ENCODE measurements at regions of chr18 and their contacts with region 1.

Region 1: DNA sequence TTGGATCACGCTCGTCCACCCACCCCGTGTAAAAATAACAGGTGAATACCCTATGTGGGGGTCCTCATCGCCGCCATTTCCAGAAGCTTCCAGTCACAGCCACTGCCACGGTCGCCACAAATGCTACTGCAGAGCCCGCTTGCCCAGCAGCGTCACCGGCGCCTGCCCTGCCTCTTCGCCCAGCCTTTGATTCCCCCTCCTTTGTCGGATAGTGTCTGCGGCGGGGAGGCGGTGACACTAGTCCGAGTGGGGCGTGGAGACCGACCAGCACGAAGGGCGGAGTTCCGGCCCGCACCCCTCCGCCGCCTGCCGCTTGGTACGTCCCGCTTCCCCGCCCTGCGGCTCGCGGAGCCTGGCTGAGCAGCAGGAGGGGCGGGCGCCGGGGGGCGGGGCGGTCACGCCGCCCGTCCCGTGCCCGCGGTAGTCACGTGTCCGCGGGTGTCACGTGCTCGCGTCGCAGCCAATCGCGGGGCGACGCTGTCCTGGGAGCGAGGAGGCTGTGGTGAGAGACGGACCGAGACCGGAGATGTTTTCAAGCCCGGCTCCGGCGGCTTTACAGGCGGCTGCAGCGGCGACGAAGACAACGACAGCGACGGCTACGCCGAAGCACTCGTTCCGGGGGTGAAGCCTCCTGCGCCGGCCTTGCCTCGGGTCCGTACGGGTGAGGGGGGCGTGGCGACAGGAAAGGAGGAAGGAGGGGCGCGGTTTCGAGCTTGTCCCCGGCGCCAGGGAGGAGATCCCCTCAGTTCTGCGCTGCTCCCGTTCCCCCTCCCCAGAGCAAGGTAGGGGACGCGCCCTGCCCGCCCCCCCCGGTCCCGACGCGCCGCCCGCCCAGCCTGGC is at the start of gene ANKRD12:
- DNase-seq: peak; percentile 98
- ATAC-seq: peak; percentile 75
- H3K4me3 Mint-ChIP-seq: peak within 1 kb of the TSS; percentile 86
- H3K27ac Mint-ChIP-seq: peak within 1 kb of the TSS; percentile 97
- H3K4me1 Mint-ChIP-seq: peaks cover 53% of the 10 kb centered on the region
- H3K27me3 Mint-ChIP-seq: no peaks in the 10 kb centered on the region
- total RNA-seq, gene ANKRD12: 57.5 to 96.0 TPM

Region 2: DNA sequence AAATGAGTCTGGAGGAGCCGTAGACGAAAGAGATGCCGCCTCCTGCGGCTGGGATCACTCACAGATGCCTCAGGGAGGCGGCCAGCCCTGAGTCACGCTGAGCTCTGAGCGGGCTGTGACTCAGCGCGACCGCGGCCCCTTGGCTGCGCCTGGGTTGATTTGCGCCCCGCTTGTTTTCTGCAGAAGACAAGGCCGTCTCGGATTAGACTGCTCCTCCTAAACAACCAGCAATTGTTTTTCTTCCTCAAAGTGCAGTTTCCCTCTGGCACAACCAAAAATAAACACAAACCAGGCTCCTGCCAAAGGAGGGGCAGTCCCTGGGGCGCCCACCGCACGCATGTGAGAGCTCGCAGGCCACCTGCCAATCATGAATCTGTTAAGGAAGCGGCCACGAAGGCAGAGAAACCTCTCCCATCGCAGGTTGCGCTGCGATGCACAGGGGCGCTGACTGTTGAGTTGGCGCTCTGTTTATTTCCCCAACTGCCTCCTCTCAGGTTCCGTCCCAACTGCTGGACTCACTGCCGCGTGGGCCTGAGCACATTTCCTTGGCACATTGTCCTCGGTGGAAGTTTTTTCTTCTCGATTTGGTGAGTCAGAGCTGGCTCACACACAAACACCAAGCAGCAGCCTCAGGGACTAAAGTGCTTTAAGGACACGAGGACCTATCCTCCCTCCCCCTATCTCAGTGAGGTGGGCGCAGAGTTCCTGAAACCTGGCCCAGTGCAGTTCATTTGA is 119.2 kb before region 1 on chr18:
- CTCF ChIA-PET with region 1: no interaction called
- POLR2A ChIA-PET with region 1: no interaction called
- intact Hi-C with region 1: loop called in 1 of 2 experiments (anchors 2 kb)
- DNase-seq: peak; percentile 92
- ATAC-seq: peak; percentile 100
- H3K4me3 Mint-ChIP-seq: peak overlapping the region; percentile 42
- H3K27ac Mint-ChIP-seq: peak overlapping the region; percentile 72
- H3K4me1 Mint-ChIP-seq: peaks cover 14% of the 10 kb centered on the region
- H3K27me3 Mint-ChIP-seq: no peaks in the 10 kb centered on the region

Region 3: DNA sequence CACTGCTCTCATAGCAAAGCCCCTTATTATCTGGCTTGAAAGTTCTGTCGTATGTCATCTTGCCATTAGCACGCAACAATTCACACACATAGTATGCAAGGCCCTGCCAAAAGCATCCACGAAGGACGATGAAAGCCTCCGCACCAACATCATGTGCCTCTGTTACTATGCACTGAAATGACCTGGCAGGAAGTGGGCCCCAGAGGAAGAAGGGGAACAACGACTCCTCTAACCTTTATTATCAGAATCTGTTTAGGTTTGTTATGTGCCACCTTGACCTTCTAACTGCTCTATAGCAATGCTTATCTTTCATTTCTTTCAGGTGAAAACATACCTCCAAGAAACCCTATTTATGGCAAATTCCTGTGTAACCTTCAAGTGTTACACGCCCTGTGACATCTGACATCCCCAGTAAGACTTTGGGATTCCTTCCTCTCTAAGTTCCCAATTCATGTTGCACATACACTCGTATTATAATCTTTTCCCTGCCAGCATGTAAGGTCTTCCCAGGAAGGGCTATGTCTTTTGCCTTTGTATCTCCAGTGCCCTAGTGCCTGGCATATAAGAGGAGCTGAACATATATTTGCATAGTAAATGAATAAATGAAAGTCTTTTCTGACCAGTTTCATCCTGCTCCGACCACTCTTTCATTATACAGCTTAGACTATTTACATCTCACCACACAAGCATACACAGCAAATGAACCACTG is 41.1 kb before region 1 on chr18:
- CTCF ChIA-PET with region 1: interaction called, 4 read pairs
- POLR2A ChIA-PET with region 1: interaction called, 6 read pairs
- intact Hi-C with region 1: loop called (anchors 2 kb)
- DNase-seq: peak; percentile 82
- ATAC-seq: peak; percentile 69
- H3K4me3 Mint-ChIP-seq: peak overlapping the region; percentile 68
- H3K27ac Mint-ChIP-seq: peak overlapping the region; percentile 100
- H3K4me1 Mint-ChIP-seq: peaks cover 68% of the 10 kb centered on the region
- H3K27me3 Mint-ChIP-seq: no peaks in the 10 kb centered on the region

Region 4: GRCh38 chr18:9117980-9118841 is 18.3 kb before region 1 on chr18:
- CTCF ChIA-PET with region 1: interaction called, 5 read pairs
- POLR2A ChIA-PET with region 1: interaction called, 24 read pairs
- intact Hi-C with region 1: loop called (anchors 1 kb)
- DNase-seq: no peak
- ATAC-seq: peak; percentile 51
- H3K4me3 Mint-ChIP-seq: peak overlapping the region; percentile 66
- H3K27ac Mint-ChIP-seq: peak overlapping the region; percentile 99
- H3K4me1 Mint-ChIP-seq: peaks cover 80% of the 10 kb centered on the region
- H3K27me3 Mint-ChIP-seq: no peaks in the 10 kb centered on the region

Region 5: GRCh38 chr18:9516437-9517064 is 380.0 kb after region 1 on chr18:
- CTCF ChIA-PET with region 1: no interaction called
- POLR2A ChIA-PET with region 1: no interaction called
- intact Hi-C with region 1: loop called (anchors 5 to 10 kb)
- DNase-seq: peak; percentile 10
- ATAC-seq: peak; percentile 47
- H3K4me3 Mint-ChIP-seq: no peak overlapping the region
- H3K27ac Mint-ChIP-seq: no peak overlapping the region
- H3K4me1 Mint-ChIP-seq: peaks cover 2% of the 10 kb centered on the region
- H3K27me3 Mint-ChIP-seq: no peaks in the 10 kb centered on the region

Measured in activated CD4-positive, alpha-beta T cell treated with anti-CD3 and anti-CD28 coated beads for 36 hours (primary cell).